ENCODE measurements at regions of chr9 and their contacts with region 1.

Region 1: GRCh38 chr9:71683598-71684235 is 84.6 kb downstream of the CEMIP2 start:
- DNase-seq: peak; percentile 47
- ATAC-seq: peak in 1 of 2 donors; percentile 56

Region 2: DNA sequence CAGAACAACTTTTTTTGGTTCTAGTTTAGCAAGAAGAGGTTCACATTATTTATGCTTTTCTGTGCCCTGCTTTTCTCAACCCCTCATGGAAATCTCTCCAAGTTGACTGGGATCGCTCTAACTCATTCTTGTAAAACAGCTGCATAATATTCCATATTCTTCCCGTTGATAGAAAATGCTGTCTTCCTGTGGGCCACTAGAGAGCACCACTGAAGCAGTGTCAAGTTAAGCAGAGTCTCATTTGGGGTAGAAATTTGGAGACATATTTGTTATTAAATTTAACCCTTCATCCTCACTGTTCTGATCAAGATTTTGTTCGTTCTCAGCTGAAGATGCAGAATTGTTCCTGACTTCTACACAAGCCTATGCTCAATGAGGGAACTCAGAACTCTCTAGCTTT is 55.5 kb before region 1 on chr9:
- intact Hi-C with region 1: loop called in 1 of 2 experiments (anchors 5 kb)
- DNase-seq: no peak
- ATAC-seq: no peak

Region 3: DNA sequence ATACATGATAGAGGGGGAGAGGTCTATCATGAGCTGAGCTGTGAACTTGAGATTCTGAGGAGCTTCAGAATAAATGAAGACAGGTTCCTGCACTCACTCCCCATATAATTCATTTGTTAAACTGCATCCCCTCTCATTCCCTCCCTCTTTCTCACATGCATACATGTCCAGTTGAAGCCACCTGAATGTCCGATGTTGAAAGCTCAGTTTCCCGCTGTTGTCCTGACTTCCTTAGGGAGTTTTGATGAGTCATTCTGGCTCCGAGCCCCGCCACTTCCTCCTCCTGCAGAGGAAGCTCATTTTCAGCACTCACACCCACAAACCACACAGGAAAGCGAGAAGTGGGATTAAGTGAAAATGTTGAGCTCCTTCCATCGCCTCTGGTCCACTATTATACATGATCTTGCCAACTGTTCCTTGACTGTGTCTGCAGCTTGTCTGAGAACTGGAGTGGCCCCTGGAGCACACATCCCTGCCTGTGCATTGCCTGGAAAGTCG is 36.6 kb before region 1 on chr9:
- intact Hi-C with region 1: no loop called
- DNase-seq: peak; percentile 87
- ATAC-seq: peak; percentile 80 to 87

Measured in left cardiac atrium (tissue), 4 donors.